Activated T-helper 2 cell treated with anti-CD3 and anti-CD28 coated beads, Interferon-gamma antibody, Interleukin-2, Interleukin-4, amounts not matched to agents 10 μg/mL and 5 μg/mL and 100 μg/mL, durations not matched to agents 14 hours and 24 hours and 36 hours (primary cell): ENCODE measurements at regions of chr22 and their contacts with region 1.

Region 1: DNA sequence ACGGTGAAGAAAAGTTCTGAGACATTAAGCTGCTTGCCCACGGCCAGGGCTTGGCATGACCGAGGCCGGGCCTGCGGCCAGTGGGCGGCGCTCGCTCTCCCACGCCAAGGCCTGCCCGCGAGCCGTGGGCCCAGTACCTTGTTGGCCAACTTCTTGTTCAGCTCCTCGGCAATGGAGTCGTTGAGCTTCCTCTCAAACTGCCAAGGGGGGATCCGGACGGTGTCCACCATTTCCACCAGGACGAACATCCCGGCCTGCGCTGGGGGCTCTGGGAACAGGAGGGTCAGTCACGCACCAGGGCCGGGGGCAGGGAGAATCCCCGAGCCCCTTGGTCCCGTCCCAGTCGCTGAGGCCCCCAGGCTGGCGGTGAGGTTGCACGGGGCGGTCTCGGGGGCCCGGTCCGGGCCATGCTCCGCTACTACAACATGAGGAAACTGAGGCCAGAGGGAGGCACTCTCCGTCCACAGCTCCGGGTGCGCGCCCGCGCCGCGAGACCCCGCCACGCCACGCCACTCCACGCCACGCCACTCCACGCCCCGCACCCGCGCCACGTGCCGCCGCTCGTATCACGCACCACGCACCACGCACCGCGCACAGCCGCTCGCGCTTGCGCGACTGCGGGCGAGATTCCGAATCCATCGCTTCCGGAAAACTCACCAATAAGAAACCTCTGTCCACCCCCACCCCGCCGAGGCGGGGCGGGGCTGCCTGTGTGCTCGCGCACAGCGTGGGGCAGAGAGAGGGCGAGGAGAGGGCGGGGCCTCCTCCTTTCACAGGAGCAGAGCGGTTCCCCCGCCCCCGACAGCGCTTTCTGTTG is at the start of gene POLR3H:
- DNase-seq: peak; percentile 96
- H3K4me3 Mint-ChIP-seq: peak within 1 kb of the TSS; percentile 91
- H3K27ac Mint-ChIP-seq: peak within 1 kb of the TSS; percentile 60
- H3K4me1 Mint-ChIP-seq: peaks cover 21% of the 10 kb centered on the region
- H3K27me3 Mint-ChIP-seq: no peaks in the 10 kb centered on the region
- total RNA-seq, gene POLR3H: 28.6 and 33.2 TPM in 2 replicates

Region 2: DNA sequence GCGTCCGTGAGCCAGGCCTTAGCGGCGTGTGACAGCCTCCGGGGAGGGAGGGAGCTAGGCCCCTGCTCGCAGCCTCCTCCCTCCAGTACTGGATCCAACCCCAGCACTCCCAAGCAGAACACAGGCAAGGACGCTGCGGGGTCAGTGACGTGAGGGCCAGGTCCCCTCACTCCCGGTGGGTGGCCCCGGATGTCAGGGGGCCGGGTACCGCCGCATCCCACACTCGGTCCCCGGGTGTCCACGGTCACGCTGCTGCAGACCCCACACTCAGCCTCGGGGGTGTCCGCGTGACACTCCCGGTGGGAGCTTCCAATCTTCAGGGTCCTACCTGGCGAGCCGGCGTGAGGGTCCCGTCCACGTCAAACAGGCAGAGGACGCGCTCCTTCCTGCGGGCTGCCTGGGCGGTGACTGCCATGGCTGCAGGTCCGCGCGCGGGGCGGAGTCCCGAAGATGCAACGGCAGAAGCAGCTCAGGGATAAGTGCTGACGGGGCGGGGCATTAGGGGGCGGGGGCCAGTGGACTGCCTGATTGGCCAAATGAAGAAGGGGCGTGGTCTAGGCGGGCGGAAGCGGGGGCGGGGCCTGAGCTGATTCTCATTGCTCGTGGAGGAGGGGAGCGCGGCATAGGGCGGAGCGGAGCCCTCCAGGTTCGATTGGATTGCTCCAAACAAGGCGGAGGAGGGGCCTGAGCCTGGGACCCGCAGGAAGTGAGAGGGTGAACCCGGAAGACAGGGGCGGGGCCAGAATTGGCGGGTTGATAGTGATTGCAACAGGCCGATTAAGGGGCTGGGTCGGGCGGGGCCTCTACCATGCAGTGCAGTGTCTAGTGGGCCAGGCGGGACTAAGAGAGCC is 45.6 kb after region 1 on chr22 and contains the start of gene PMM1:
- intact Hi-C with region 1: loop called (anchors 2 kb)
- DNase-seq: peak; percentile 100
- H3K4me3 Mint-ChIP-seq: peak within 1 kb of the TSS; percentile 91
- H3K27ac Mint-ChIP-seq: peak within 1 kb of the TSS; percentile 84
- H3K4me1 Mint-ChIP-seq: peaks cover 10% of the 10 kb centered on the region
- H3K27me3 Mint-ChIP-seq: no peaks in the 10 kb centered on the region
- total RNA-seq, gene PMM1: 23.4 and 25.8 TPM in 2 replicates

Region 3: DNA sequence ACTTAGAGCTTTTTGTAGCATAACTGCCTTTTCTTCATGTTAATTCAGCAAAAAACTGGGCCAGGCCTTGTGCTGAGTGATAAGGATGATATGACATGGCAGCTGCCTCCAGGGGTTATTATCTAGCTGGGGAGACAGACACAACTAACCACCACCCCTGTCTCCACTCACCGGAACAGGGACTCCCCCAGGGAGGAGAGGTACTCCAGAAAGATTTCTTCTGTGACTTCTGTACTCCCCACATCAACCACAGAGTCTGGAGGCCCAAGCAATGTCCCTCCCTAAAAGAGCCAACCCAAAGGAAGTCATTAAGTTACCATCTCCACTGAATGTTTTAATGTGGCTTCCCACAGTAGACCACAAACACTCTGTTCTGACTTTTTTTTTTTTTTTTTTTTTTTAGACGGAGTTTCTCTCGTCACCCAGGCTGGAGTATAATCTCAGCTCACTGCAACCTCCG is 59.8 kb after region 1 on chr22:
- intact Hi-C with region 1: loop called (anchors 5 kb)
- DNase-seq: peak; percentile 70
- H3K4me3 Mint-ChIP-seq: no peak overlapping the region
- H3K27ac Mint-ChIP-seq: peak overlapping the region; percentile 6
- H3K4me1 Mint-ChIP-seq: peaks cover 38% of the 10 kb centered on the region
- H3K27me3 Mint-ChIP-seq: peaks cover 4% of the 10 kb centered on the region